Gastrocnemius medialis (tissue), 4 donors: ENCODE measurements at regions of chr12 and their contacts with region 1.

Region 1: GRCh38 chr12:119249326-119250155 is 70.8 kb downstream of the HSPB8 start:
- DNase-seq: no peak
- ATAC-seq: no peak
- H3K4me3 ChIP-seq: no peak overlapping the region
- H3K27ac ChIP-seq: peak overlapping the region in 2 of 4 donors; percentile 3 to 26
- H3K4me1 ChIP-seq: peaks cover 23 to 28% of the 10 kb centered on the region in 2 donors
- H3K27me3 ChIP-seq: no peaks in the 10 kb centered on the region
- CTCF ChIP-seq: no peak
- POLR2A ChIP-seq: no peak

Region 2: GRCh38 chr12:119145367-119145766 is 104.2 kb before region 1 on chr12:
- in situ Hi-C with region 1: no loop called
- intact Hi-C with region 1: no loop called
- DNase-seq: no peak
- ATAC-seq: no peak
- H3K4me3 ChIP-seq: no peak overlapping the region
- H3K27ac ChIP-seq: no peak overlapping the region
- H3K4me1 ChIP-seq: peaks cover 8 to 10% of the 10 kb centered on the region in 2 donors
- H3K27me3 ChIP-seq: no peaks in the 10 kb centered on the region
- CTCF ChIP-seq: no peak
- POLR2A ChIP-seq: no peak

Region 3: GRCh38 chr12:119156401-119157044 is 93.0 kb before region 1 on chr12:
- in situ Hi-C with region 1: no loop called
- intact Hi-C with region 1: loop called (anchors 2 kb)
- DNase-seq: peak in 1 of 2 donors; percentile 30
- ATAC-seq: no peak
- H3K4me3 ChIP-seq: no peak overlapping the region
- H3K27ac ChIP-seq: peak overlapping the region; percentile 93 to 99 (median 95)
- H3K4me1 ChIP-seq: peaks cover 43 to 46% of the 10 kb centered on the region in 2 donors
- H3K27me3 ChIP-seq: no peaks in the 10 kb centered on the region
- CTCF ChIP-seq: peak in 1 of 5 experiments; percentile 23
- POLR2A ChIP-seq: no peak